Natural killer cell (primary cell): ENCODE measurements at regions of chr12 and their contacts with region 1.

Region 1: DNA sequence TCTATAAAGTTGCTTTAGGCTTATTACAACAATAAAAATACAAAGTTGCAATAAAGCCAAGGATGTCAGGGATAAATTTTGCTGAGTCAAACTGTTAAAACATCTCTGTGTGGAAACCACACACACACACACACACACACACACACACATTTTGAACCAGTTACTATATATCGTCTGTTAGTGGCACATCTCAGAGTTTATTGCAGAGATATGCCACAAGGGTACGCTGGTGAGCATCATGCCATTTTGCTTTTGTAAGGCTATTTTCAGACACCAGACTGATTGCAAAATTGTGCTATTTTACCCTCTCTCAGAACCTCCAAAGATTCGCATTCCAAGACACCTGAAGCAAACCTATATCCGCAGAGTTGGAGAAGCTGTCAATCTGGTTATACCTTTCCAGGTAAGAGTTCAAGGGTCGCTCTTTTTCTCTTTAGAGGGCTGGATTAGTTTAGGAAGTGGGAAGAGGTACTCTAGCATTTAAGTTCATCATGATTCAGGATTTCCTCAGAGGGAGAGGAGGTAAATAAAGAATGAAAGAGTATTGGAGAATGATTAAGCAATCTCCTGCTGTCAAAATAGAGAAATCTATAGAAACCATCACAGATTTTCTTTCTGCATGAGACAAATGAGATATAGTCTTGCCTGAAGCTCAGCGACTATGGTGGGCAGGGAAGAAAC is 27.3 kb upstream of the CHPT1 start:
- DNase-seq: peak; percentile 20 to 77
- ATAC-seq: peak; percentile 81 to 88 (median 83)
- H3K4me3 ChIP-seq: no peak overlapping the region
- H3K4me3 Mint-ChIP-seq: peak overlapping the region; percentile 22
- H3K27ac ChIP-seq: no peak overlapping the region
- H3K27ac Mint-ChIP-seq: no peak overlapping the region
- H3K4me1 ChIP-seq: peaks cover 17% of the 10 kb centered on the region
- H3K4me1 Mint-ChIP-seq: peaks cover 20 to 21% of the 10 kb centered on the region in 2 donors
- H3K27me3 ChIP-seq: no peaks in the 10 kb centered on the region
- H3K27me3 Mint-ChIP-seq: peaks cover 10 to 24% of the 10 kb centered on the region in 2 donors
- CTCF ChIP-seq: peak; percentile 65

Region 2: DNA sequence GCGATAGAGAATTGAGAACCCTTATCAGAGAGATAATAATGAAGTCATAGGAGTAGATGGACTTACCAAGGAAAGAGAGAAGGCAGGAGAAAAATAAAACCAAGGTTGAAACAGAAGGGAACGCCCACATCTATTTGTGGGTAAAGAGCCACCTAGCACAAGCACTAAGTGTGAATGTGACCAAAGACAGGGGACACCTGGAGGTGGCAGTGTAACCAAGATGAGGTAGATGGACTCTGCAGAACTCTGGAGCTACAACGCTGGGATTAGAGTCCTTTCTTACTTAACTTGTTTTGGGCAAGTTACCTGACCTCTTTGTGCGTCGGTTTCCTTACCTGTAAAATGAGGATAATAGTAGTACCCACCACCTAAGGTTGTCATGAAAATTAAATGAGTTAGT is 562.0 kb before region 1 on chr12:
- intact Hi-C with region 1: no loop called
- DNase-seq: no peak
- ATAC-seq: no peak
- H3K4me3 ChIP-seq: no peak overlapping the region
- H3K4me3 Mint-ChIP-seq: no peak overlapping the region
- H3K27ac ChIP-seq: no peak overlapping the region
- H3K27ac Mint-ChIP-seq: no peak overlapping the region
- H3K4me1 ChIP-seq: no peaks in the 10 kb centered on the region
- H3K4me1 Mint-ChIP-seq: no peaks in the 10 kb centered on the region
- H3K27me3 ChIP-seq: no peaks in the 10 kb centered on the region
- H3K27me3 Mint-ChIP-seq: no peaks in the 10 kb centered on the region
- CTCF ChIP-seq: no peak

Region 3: GRCh38 chr12:101743724-101744472 is 73.8 kb after region 1 on chr12:
- intact Hi-C with region 1: loop called (anchors 10 kb)
- DNase-seq: peak; percentile 33 to 46
- ATAC-seq: peak; percentile 82 to 86 (median 84)
- H3K4me3 ChIP-seq: no peak overlapping the region
- H3K4me3 Mint-ChIP-seq: peak overlapping the region; percentile 8
- H3K27ac ChIP-seq: peak overlapping the region; percentile 83
- H3K27ac Mint-ChIP-seq: peak overlapping the region; percentile 92
- H3K4me1 ChIP-seq: peaks cover 19% of the 10 kb centered on the region
- H3K4me1 Mint-ChIP-seq: peaks cover 28 to 38% of the 10 kb centered on the region in 2 donors
- H3K27me3 ChIP-seq: no peaks in the 10 kb centered on the region
- H3K27me3 Mint-ChIP-seq: no peaks in the 10 kb centered on the region
- CTCF ChIP-seq: no peak

Region 4: GRCh38 chr12:101962486-101962885 is 292.3 kb after region 1 on chr12:
- intact Hi-C with region 1: no loop called
- DNase-seq: no peak
- ATAC-seq: no peak
- H3K4me3 ChIP-seq: no peak overlapping the region
- H3K4me3 Mint-ChIP-seq: no peak overlapping the region
- H3K27ac ChIP-seq: no peak overlapping the region
- H3K27ac Mint-ChIP-seq: no peak overlapping the region
- H3K4me1 ChIP-seq: peaks cover 3% of the 10 kb centered on the region
- H3K4me1 Mint-ChIP-seq: peaks cover 2% of the 10 kb centered on the region in 2 donors
- H3K27me3 ChIP-seq: no peaks in the 10 kb centered on the region
- H3K27me3 Mint-ChIP-seq: peaks cover 0 to 2% of the 10 kb centered on the region in 2 donors
- CTCF ChIP-seq: no peak